Transverse colon (tissue), 4 donors: ENCODE measurements at regions of chr3 and their contacts with region 1.

Region 1: GRCh38 chr3:169676925-169677537 is 13.5 kb upstream of the MECOM start:
- DNase-seq: no peak
- H3K4me3 ChIP-seq: no peak overlapping the region
- H3K27ac ChIP-seq: no peak overlapping the region
- H3K4me1 ChIP-seq: no peaks in the 10 kb centered on the region
- H3K27me3 ChIP-seq: peaks cover 20% of the 10 kb centered on the region
- CTCF ChIP-seq: no peak
- EP300 ChIP-seq: no peak
- POLR2A ChIP-seq: no peak

Region 2: GRCh38 chr3:169133178-169134161 is 543.6 kb before region 1 on chr3:
- in situ Hi-C with region 1: loop called in 3 of 4 experiments (anchors 10 to 25 kb)
- intact Hi-C with region 1: no loop called
- DNase-seq: no peak
- H3K4me3 ChIP-seq: no peak overlapping the region
- H3K27ac ChIP-seq: no peak overlapping the region
- H3K4me1 ChIP-seq: peaks cover 0 to 16% (median 3%) of the 10 kb centered on the region in 4 donors
- H3K27me3 ChIP-seq: no peaks in the 10 kb centered on the region
- CTCF ChIP-seq: peak; percentile 22 to 36 (median 25)
- EP300 ChIP-seq: no peak
- POLR2A ChIP-seq: no peak